ENCODE measurements at regions of chr5 and their contacts with region 1.

Region 1: GRCh38 chr5:109335114-109335513 is 74.7 kb downstream of the PJA2 start:
- DNase-seq: no peak
- ATAC-seq: no peak
- H3K4me3 Mint-ChIP-seq: no peak overlapping the region
- H3K27ac Mint-ChIP-seq: no peak overlapping the region
- H3K4me1 Mint-ChIP-seq: peaks cover under 1% of the 10 kb centered on the region
- H3K27me3 Mint-ChIP-seq: no peaks in the 10 kb centered on the region

Region 2: DNA sequence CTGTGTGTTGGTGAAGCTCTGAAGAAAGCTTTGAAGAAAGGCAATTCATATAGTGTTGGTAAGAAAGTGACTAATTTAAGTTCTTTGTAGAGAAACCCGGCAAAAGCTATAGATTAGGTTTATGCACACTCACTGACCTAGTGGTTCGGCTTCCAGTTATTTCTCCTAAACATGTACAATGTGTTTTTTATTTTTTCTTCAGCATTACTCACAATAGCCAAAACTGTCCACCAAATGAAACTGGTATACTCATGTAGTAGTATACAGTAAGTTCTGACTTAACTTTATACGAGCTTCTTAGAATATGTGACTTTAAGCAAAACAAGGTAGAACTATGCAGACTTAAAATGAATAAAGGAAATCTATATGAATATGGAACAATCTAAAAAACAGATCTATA is 29.9 kb after region 1 on chr5:
- CTCF ChIA-PET with region 1: no interaction called
- POLR2A ChIA-PET with region 1: no interaction called
- intact Hi-C with region 1: loop called in 1 of 2 experiments (anchors 1 kb)
- DNase-seq: no peak
- ATAC-seq: peak; percentile 26
- H3K4me3 Mint-ChIP-seq: no peak overlapping the region
- H3K27ac Mint-ChIP-seq: no peak overlapping the region
- H3K4me1 Mint-ChIP-seq: peaks cover 12% of the 10 kb centered on the region
- H3K27me3 Mint-ChIP-seq: no peaks in the 10 kb centered on the region

Region 3: GRCh38 chr5:109611505-109611904 is 276.4 kb after region 1 on chr5:
- CTCF ChIA-PET with region 1: no interaction called
- POLR2A ChIA-PET with region 1: no interaction called
- intact Hi-C with region 1: no loop called
- DNase-seq: no peak
- ATAC-seq: no peak
- H3K4me3 Mint-ChIP-seq: no peak overlapping the region
- H3K27ac Mint-ChIP-seq: no peak overlapping the region
- H3K4me1 Mint-ChIP-seq: no peaks in the 10 kb centered on the region
- H3K27me3 Mint-ChIP-seq: peaks cover 2% of the 10 kb centered on the region

Measured in activated CD4-positive, alpha-beta T cell treated with anti-CD3 and anti-CD28 coated beads for 36 hours (primary cell).